Activated CD4-positive, alpha-beta T cell treated with anti-CD3 and anti-CD28 coated beads for 36 hours (primary cell): ENCODE measurements at regions of chr7 and their contacts with region 1.

Region 1: DNA sequence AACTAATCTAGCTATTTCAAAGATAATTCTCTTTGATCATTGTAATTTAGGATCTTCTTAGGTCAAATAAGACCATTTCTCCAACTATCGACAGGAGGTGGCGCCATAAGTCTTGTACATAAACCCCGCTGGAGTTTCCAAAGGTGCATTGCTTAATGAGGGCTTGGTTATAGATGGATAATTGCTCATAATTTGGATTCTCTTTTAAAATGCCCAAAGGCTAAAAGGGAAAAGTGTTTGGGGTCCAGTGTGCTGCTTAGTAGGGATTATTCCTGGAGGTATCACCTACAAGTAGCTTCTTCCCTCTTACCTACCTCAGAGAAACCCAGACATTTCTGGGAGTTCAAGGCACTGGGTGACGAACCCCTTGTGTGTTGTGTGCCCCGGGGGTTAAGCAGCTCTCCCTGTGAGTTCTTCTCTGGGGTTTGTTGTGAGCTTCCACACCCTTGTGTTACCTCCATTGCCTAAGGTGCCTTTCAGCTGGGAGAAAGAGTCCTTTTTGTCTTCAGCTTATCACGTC is 75.2 kb downstream of the PAXIP1 start:
- DNase-seq: peak; percentile 88
- ATAC-seq: peak; percentile 65
- H3K4me3 Mint-ChIP-seq: peak overlapping the region; percentile 99
- H3K27ac Mint-ChIP-seq: peak overlapping the region; percentile 96
- H3K4me1 Mint-ChIP-seq: peaks cover 22% of the 10 kb centered on the region
- H3K27me3 Mint-ChIP-seq: no peaks in the 10 kb centered on the region

Region 2: DNA sequence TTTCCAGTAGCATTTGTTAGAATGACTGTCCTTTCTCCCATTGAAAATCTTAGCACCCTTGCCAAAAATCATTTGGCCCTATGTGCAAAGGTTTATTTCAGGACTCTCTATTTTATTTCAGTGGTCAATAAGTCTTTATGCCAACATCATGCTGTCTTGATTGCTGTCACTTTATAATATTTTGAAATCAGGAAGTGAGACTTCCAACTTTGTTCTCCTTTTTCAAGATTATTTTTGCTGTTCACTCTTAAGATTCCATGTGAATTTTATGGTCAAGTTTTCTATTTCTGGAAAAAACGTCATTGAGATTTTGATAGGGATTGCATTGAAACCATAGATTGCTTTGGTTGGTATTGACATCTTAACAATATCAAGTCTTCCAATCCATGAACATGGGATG is 10.2 kb after region 1 on chr7:
- CTCF ChIA-PET with region 1: interaction called, 36 read pairs
- POLR2A ChIA-PET with region 1: no interaction called
- intact Hi-C with region 1: no loop called
- DNase-seq: no peak
- ATAC-seq: no peak
- H3K4me3 Mint-ChIP-seq: no peak overlapping the region
- H3K27ac Mint-ChIP-seq: no peak overlapping the region
- H3K4me1 Mint-ChIP-seq: peaks cover 3% of the 10 kb centered on the region
- H3K27me3 Mint-ChIP-seq: no peaks in the 10 kb centered on the region

Region 3: DNA sequence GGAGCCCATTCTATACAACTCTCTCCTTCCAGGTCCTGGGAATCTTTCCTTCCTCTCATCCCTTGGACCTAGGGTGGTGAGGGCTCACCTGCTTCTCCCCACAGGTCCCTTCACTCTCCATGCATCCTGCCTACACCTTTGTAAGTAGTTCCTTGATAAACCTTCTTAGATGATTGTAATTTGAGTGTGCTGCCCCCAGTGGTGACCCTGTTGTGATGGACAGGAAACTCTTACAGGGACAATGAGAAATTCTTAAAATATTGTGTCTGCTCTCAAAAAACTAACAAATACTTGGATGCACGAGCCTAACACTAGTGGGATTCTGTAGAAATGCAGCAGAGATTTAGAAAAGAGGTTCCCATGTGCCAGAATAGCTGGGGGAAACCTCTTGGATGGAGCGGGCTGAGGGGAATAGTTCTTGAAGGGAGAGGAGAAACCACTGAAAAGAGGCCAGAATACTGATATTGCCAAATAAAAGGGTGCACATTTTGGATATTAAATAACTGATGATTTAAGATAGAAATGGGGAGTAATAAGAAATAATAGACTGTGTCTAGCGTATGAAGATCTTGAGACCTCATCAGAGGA is 82.0 kb after region 1 on chr7:
- CTCF ChIA-PET with region 1: interaction called, 10 read pairs
- POLR2A ChIA-PET with region 1: no interaction called
- intact Hi-C with region 1: loop called in 1 of 2 experiments (anchors 5 kb)
- DNase-seq: peak; percentile 57
- ATAC-seq: peak; percentile 47
- H3K4me3 Mint-ChIP-seq: no peak overlapping the region
- H3K27ac Mint-ChIP-seq: no peak overlapping the region
- H3K4me1 Mint-ChIP-seq: peaks cover 3% of the 10 kb centered on the region
- H3K27me3 Mint-ChIP-seq: no peaks in the 10 kb centered on the region

Region 4: GRCh38 chr7:155205368-155206317 is 278.0 kb after region 1 on chr7:
- CTCF ChIA-PET with region 1: no interaction called
- POLR2A ChIA-PET with region 1: interaction called, 4 read pairs
- intact Hi-C with region 1: loop called (anchors 1 kb)
- DNase-seq: peak; percentile 95
- ATAC-seq: peak; percentile 84
- H3K4me3 Mint-ChIP-seq: peak overlapping the region; percentile 77
- H3K27ac Mint-ChIP-seq: peak overlapping the region; percentile 100
- H3K4me1 Mint-ChIP-seq: peaks cover 60% of the 10 kb centered on the region
- H3K27me3 Mint-ChIP-seq: no peaks in the 10 kb centered on the region

Region 5: DNA sequence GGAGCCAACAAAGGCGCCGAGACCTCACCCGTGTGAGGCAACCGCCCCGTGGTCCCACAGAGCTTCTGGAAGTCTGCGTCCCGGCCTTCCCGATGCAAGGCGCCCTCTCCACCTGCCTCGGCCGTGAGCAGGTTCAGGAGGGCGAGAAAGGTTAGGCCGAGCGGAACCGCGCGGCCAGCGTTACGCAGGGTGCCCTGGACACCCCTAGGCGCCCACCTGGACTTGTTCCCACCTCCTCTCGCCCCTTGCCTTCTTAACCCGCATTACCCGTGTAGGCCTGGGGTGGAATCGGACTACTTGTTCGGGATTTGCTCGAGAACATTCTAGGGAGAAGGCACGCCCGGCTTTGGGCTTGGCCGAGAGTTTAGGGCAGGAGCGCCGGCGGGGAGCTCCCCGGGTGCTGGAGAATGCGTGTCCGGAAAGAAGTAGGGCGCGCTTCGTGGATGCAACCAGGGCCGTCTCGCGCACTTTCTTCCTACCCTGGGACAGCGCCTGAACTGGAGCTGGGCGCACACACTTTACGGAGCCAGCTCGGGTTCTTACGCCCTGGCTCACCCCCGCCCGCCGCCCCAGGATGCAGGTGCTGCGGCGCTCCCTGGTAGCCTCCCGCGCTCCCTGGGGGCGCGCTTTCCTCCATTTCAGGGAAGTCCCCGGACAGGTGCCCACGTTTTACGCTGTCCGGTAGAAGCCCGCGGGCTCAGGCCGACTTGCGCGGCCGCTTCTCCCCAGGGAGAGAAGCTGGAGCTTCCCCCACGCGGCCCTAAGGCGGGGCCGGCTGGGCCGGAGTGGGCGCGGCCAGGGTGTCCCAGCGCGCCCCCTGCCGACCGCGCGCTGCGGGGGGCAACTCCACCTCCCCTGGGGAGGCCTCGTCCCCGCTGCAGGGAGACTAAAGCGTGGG is 444.4 kb after region 1 on chr7:
- CTCF ChIA-PET with region 1: interaction called, 11 read pairs
- POLR2A ChIA-PET with region 1: no interaction called
- intact Hi-C with region 1: loop called in 1 of 2 experiments (anchors 10 kb)
- DNase-seq: peak; percentile 45
- ATAC-seq: peak; percentile 74
- H3K4me3 Mint-ChIP-seq: no peak overlapping the region
- H3K27ac Mint-ChIP-seq: no peak overlapping the region
- H3K4me1 Mint-ChIP-seq: peaks cover 29% of the 10 kb centered on the region
- H3K27me3 Mint-ChIP-seq: peaks cover 65% of the 10 kb centered on the region

Region 6: GRCh38 chr7:155738652-155739537 is 811.2 kb after region 1 on chr7:
- CTCF ChIA-PET with region 1: interaction called, 3 read pairs
- POLR2A ChIA-PET with region 1: no interaction called
- intact Hi-C with region 1: loop called in 1 of 2 experiments (anchors 2 kb)
- DNase-seq: peak; percentile 85
- ATAC-seq: peak; percentile 68
- H3K4me3 Mint-ChIP-seq: peak overlapping the region; percentile 21
- H3K27ac Mint-ChIP-seq: peak overlapping the region; percentile 72
- H3K4me1 Mint-ChIP-seq: peaks cover 64% of the 10 kb centered on the region
- H3K27me3 Mint-ChIP-seq: no peaks in the 10 kb centered on the region